ENCODE measurements at regions of chr6 and their contacts with region 1.

Region 1: GRCh38 chr6:2749969-2750600 is 637 bp downstream of the MYLK4 start:
- DNase-seq: peak; percentile 77
- ATAC-seq: peak; percentile 49
- H3K4me3 Mint-ChIP-seq: no peak overlapping the region
- H3K27ac Mint-ChIP-seq: no peak overlapping the region
- H3K4me1 Mint-ChIP-seq: peaks cover 16% of the 10 kb centered on the region
- H3K27me3 Mint-ChIP-seq: peaks cover 47% of the 10 kb centered on the region

Region 2: GRCh38 chr6:2733324-2733723 is 16.8 kb before region 1 on chr6:
- CTCF ChIA-PET with region 1: interaction called, 83 read pairs
- DNase-seq: peak; percentile 81
- ATAC-seq: peak; percentile 96
- H3K4me3 Mint-ChIP-seq: no peak overlapping the region
- H3K27ac Mint-ChIP-seq: no peak overlapping the region
- H3K4me1 Mint-ChIP-seq: peaks cover 19% of the 10 kb centered on the region
- H3K27me3 Mint-ChIP-seq: peaks cover 2% of the 10 kb centered on the region

Region 3: GRCh38 chr6:2738373-2738979 is 11.6 kb before region 1 on chr6:
- CTCF ChIA-PET with region 1: interaction called, 83 read pairs
- DNase-seq: peak; percentile 72
- ATAC-seq: peak; percentile 65
- H3K4me3 Mint-ChIP-seq: no peak overlapping the region
- H3K27ac Mint-ChIP-seq: no peak overlapping the region
- H3K4me1 Mint-ChIP-seq: peaks cover 9% of the 10 kb centered on the region
- H3K27me3 Mint-ChIP-seq: peaks cover 5% of the 10 kb centered on the region

Region 4: GRCh38 chr6:2765166-2765895 is 15.2 kb after region 1 on chr6 and contains the start of gene WRNIP1:
- CTCF ChIA-PET with region 1: interaction called, 55 read pairs
- DNase-seq: peak; percentile 99
- ATAC-seq: peak; percentile 89
- H3K4me3 Mint-ChIP-seq: peak within 1 kb of the TSS; percentile 95
- H3K27ac Mint-ChIP-seq: peak within 1 kb of the TSS; percentile 98
- H3K4me1 Mint-ChIP-seq: peaks cover 47% of the 10 kb centered on the region
- H3K27me3 Mint-ChIP-seq: no peaks in the 10 kb centered on the region
- total RNA-seq, gene WRNIP1: 48.7 to 53.3 TPM